Activated CD4-positive, alpha-beta T cell treated with anti-CD3 and anti-CD28 coated beads for 36 hours (primary cell): ENCODE measurements at regions of chr12 and their contacts with region 1.

Region 1: DNA sequence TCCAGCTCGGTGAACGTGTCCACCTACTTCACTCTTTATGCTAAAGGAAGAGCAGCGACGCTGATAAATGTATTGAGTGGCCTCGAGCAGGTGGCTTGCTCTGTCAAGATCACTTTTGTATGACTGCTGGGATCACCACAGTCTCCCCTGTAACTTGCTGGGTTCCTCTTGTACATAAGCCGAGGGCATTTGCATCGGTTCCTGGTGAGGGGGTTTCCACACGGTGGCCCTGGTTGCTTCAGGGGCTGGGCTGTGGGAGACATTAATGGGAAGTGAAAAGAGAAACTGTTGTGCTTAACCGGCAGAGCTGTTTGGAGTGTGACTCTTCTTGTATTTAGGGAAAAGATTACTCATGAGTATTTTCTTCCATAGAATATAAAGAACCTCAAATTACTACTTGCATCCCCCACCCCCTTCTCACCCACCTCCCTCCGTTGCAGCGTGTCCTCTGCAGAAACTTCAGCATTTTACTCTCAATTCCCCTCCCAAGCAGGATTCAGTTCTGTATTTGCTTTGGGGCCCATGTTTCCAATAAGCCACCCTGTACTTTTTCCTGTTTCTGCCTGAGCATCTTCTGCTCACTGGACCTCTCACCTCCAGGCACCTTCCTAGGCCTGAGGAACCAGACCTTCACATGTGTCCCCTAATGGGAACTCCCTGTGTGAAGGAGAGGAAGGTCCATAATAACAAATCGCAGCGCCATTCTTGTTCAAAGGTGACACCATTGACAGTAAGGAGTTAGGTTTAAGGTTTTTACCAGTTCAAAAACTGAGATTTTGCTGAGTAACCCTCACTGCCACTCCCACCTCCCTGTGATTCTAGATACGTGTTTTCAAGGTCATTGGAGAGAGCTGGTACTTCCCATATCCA is 187.0 kb downstream of the ETV6 start:
- DNase-seq: peak; percentile 88
- ATAC-seq: peak; percentile 86
- H3K4me3 Mint-ChIP-seq: peak overlapping the region; percentile 45
- H3K27ac Mint-ChIP-seq: peak overlapping the region; percentile 95
- H3K4me1 Mint-ChIP-seq: peaks cover 77% of the 10 kb centered on the region
- H3K27me3 Mint-ChIP-seq: no peaks in the 10 kb centered on the region

Region 2: GRCh38 chr12:11460343-11461023 is 376.0 kb before region 1 on chr12:
- CTCF ChIA-PET with region 1: no interaction called
- POLR2A ChIA-PET with region 1: no interaction called
- intact Hi-C with region 1: no loop called
- DNase-seq: no peak
- ATAC-seq: no peak
- H3K4me3 Mint-ChIP-seq: no peak overlapping the region
- H3K27ac Mint-ChIP-seq: no peak overlapping the region
- H3K4me1 Mint-ChIP-seq: no peaks in the 10 kb centered on the region
- H3K27me3 Mint-ChIP-seq: no peaks in the 10 kb centered on the region

Region 3: DNA sequence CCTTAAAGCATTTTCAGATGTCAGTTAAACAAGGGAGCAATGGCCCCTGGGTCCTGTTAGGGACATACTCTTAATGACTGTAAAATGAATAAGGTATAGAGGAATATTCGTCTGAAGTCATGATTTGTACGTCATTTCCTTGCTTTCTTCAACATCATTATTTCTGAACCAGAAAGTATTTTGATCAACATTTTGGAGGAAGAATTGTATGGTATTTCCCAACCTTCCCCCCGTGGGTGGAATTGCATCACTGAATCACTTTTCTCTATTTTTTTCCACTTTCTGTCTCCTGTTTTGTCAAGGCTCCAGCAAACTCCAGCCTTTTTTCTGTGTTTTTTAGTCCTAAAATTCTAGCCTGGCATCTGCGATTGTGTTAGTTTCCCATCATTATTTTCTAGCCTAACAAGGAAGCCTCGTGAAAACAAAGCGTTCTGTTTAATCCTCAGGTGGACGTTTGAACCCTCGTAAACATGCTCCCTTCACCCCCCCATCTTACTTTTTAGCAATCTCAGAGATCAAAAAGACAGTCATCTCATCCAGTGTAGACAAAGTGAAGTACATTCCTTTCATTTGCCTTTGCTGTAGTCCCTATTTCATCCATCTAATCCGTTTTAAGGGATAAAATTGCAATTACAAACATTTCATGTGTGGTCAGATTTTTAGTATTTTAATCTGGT is 124.7 kb before region 1 on chr12:
- CTCF ChIA-PET with region 1: no interaction called
- POLR2A ChIA-PET with region 1: no interaction called
- intact Hi-C with region 1: loop called in 1 of 2 experiments (anchors 5 kb)
- DNase-seq: no peak
- ATAC-seq: no peak
- H3K4me3 Mint-ChIP-seq: no peak overlapping the region
- H3K27ac Mint-ChIP-seq: peak overlapping the region; percentile 72
- H3K4me1 Mint-ChIP-seq: peaks cover 76% of the 10 kb centered on the region
- H3K27me3 Mint-ChIP-seq: no peaks in the 10 kb centered on the region

Region 4: DNA sequence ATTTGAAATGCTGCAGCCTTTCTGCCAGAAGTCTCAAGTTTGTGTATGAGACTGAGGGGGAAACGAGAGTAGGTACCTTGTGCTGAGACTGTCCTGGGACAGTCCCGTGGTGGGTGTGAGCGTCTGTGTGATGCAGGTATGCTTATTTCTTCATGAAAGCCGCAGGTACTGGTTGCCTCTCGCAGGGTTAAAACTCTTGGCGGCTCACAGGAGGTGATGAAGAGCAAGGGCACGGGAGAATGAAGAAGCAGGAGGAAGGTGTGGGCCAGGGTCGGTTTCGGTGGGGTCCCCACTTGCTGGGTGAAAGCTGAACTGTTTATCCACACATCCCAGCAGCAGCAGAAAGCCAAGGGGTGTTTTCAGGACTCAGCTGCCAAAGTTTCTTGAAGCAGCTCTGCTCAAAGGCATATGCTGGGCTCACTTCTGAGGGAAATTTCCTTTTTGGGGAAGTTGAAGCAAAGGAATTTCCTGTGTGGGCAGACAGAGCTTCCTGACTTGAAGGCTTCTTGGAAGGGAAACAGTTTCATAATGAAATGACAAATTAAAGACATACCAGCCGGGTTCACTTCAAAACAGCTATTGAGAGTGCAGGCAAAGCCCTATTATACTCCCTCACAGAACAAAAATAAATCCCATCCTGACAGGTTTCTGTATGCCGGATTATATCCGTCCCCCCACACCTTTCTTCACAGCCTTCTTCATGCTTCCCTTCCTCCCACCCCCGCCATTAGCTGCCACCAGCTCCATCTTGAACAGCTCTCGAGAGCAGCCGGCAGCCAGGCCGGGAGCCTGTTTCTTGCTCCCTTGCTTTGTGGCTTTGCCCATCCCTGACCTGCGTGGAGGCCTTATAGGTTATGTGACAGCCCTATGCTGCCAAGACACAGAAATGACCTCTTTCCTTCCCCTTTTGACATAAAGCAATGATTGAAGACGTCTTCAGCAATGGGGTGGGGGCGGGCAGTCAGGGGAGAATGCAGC is 70.4 kb before region 1 on chr12:
- CTCF ChIA-PET with region 1: interaction called, 4 read pairs
- POLR2A ChIA-PET with region 1: interaction called, 6 read pairs
- intact Hi-C with region 1: loop called in 1 of 2 experiments (anchors 1 kb)
- DNase-seq: peak; percentile 90
- ATAC-seq: peak; percentile 89
- H3K4me3 Mint-ChIP-seq: peak overlapping the region; percentile 32
- H3K27ac Mint-ChIP-seq: peak overlapping the region; percentile 84
- H3K4me1 Mint-ChIP-seq: peaks cover 100% of the 10 kb centered on the region
- H3K27me3 Mint-ChIP-seq: no peaks in the 10 kb centered on the region

Region 5: DNA sequence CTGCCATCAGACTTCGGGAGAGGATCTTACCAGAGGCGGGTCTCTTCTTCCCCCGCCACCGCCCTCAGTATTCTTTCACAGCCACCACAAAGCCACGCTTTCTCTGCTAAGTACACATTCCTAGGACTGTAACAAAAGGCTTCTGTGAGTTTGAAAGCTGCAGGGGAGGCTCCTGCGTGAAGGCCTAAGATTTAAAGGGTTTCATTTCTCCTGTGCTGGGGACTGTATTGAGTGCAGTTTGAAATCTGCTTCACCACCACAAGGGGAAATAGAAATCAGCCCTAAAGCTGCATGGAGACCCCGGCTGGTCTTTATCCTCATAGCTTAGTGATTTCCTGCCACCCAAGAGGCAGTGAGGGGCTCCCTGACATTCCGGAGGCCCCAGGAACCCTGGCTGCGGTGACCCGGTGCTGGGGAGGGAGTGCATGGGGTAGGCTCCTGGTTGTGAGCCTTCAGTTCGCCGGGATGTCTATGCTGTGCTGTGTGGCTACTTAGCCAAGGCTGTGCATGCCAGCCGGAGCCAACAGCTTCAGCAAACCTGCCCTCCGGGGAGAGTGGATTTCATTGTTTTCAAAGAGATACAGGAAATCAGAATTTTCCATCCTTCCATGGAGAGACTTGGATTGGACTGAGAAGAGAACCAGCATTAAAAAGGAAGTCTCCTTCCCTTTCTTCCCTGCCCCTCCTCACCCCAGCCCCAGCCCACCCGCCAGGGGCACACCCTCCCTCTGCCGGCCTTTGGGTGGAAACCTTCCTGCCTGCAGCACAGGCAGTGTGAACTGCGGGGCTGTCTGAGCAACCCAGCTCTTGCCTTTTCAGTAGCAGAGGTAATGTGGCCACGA is 23.7 kb before region 1 on chr12:
- CTCF ChIA-PET with region 1: interaction called, 3 read pairs
- POLR2A ChIA-PET with region 1: interaction called, 3 read pairs
- intact Hi-C with region 1: loop called in 1 of 2 experiments (anchors 2 kb)
- DNase-seq: peak; percentile 42
- ATAC-seq: peak; percentile 49
- H3K4me3 Mint-ChIP-seq: peak overlapping the region; percentile 46
- H3K27ac Mint-ChIP-seq: peak overlapping the region; percentile 72
- H3K4me1 Mint-ChIP-seq: peaks cover 60% of the 10 kb centered on the region
- H3K27me3 Mint-ChIP-seq: no peaks in the 10 kb centered on the region

Region 6: GRCh38 chr12:11901701-11902524 is 65.4 kb after region 1 on chr12:
- CTCF ChIA-PET with region 1: no interaction called
- POLR2A ChIA-PET with region 1: no interaction called
- intact Hi-C with region 1: loop called in 1 of 2 experiments (anchors 2 kb)
- DNase-seq: peak; percentile 75
- ATAC-seq: peak; percentile 78
- H3K4me3 Mint-ChIP-seq: peak overlapping the region; percentile 39
- H3K27ac Mint-ChIP-seq: peak overlapping the region; percentile 88
- H3K4me1 Mint-ChIP-seq: peaks cover 44% of the 10 kb centered on the region
- H3K27me3 Mint-ChIP-seq: peaks cover 2% of the 10 kb centered on the region

Region 7: GRCh38 chr12:11981121-11981733 is 144.7 kb after region 1 on chr12:
- CTCF ChIA-PET with region 1: interaction called, 4 read pairs
- POLR2A ChIA-PET with region 1: interaction called, 3 read pairs
- intact Hi-C with region 1: loop called (anchors 1 to 2 kb)
- DNase-seq: peak; percentile 70
- ATAC-seq: peak; percentile 87
- H3K4me3 Mint-ChIP-seq: peak overlapping the region; percentile 26
- H3K27ac Mint-ChIP-seq: peak overlapping the region; percentile 99
- H3K4me1 Mint-ChIP-seq: peaks cover 58% of the 10 kb centered on the region
- H3K27me3 Mint-ChIP-seq: no peaks in the 10 kb centered on the region

Region 8: DNA sequence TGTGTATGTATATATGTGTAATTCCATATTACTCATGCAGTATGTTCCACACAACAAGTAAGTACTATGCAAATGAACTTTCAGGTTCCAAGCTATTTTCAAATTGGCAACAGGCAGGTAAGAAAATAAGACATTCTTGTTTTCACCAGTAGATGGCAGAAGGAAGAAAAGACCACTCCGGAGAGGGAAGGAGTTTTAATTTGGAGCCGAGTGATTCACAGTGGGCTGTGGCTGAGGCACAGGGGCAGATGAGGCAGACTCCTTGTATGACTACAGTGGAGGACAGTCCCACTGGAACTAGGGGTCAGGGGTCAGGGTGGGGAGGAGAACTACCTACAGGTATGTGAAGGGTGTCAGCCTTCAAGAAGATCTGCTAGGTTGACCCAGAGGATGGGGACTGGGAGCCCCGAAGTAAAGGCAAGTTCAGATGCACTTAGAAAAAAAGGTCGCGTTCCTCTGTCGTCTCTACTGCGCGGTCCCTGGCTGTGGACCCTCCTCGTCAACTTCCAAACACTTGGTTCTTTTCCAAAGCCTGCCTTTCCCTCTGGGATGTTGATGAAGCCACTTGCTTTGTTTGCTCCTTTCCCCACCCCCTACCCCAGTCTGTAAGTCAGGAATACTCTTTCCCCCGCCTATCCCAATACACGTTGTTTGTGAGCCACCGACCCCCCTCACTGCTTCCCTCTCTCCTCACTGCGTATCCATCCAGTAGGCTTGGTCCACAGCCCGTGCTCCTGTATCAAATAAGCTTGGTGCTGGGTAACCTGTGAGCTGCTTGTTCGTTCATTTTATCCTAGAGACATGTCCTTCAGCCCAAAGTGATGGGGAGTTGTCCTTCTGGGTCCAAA is 1000.7 kb after region 1 on chr12:
- CTCF ChIA-PET with region 1: no interaction called
- POLR2A ChIA-PET with region 1: no interaction called
- intact Hi-C with region 1: no loop called
- DNase-seq: peak; percentile 76
- ATAC-seq: peak; percentile 95
- H3K4me3 Mint-ChIP-seq: no peak overlapping the region
- H3K27ac Mint-ChIP-seq: peak overlapping the region; percentile 77
- H3K4me1 Mint-ChIP-seq: peaks cover 44% of the 10 kb centered on the region
- H3K27me3 Mint-ChIP-seq: no peaks in the 10 kb centered on the region